Transverse colon (tissue), 4 donors: ENCODE measurements at regions of chr9 and their contacts with region 1.

Region 1: DNA sequence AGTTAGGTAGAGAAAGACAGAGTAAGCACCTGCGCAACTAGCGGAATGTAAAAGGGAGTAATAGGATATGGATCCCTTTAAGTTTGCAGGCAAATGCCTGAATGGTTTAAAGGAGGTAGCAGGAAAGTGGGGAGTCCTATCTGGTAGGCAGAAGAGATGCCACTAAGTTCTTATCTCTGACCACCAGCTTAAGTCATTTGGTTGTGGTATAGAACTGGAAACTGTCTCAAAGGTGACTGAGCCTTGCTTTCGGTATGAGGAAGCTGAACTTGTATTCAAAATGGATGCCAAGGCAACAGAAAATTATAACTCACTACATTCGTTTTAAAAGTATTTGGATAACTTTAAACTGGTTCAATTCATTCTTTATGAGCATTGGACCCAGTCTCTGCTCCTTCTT is 475.6 kb downstream of the DMRTA1 start:
- DNase-seq: no peak
- H3K4me3 ChIP-seq: no peak overlapping the region
- H3K27ac ChIP-seq: no peak overlapping the region
- H3K4me1 ChIP-seq: no peaks in the 10 kb centered on the region
- H3K27me3 ChIP-seq: no peaks in the 10 kb centered on the region
- CTCF ChIP-seq: no peak
- EP300 ChIP-seq: no peak
- POLR2A ChIP-seq: no peak

Region 2: DNA sequence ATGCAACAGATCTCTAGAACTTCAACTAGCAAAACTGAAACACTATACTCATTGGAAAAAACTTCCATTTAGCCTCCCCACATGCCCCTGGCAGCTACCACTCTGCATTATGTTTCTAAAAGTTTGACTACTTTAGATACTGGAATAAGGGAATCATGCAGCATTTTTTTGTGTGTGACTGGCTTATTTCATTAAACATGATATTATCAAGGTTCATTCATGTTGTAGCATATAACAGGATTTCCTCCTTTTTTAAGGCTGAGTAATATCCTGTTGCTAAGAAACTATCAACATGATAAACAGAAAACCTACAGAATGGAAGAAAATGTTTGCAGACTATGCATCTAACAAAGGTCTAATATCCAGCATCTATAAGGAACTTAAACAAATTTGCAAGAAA is 122.3 kb after region 1 on chr9:
- in situ Hi-C with region 1: loop called in 1 of 4 experiments (anchors 25 kb)
- intact Hi-C with region 1: no loop called
- DNase-seq: no peak
- H3K4me3 ChIP-seq: no peak overlapping the region
- H3K27ac ChIP-seq: no peak overlapping the region
- H3K4me1 ChIP-seq: no peaks in the 10 kb centered on the region
- H3K27me3 ChIP-seq: no peaks in the 10 kb centered on the region
- CTCF ChIP-seq: no peak
- EP300 ChIP-seq: no peak
- POLR2A ChIP-seq: no peak